Breast epithelium (tissue), 4 donors: ENCODE measurements at regions of chr10 and their contacts with region 1.

Region 1: GRCh38 chr10:69506834-69507721 is 55.8 kb downstream of the TSPAN15 start:
- DNase-seq: no peak
- H3K4me3 ChIP-seq: peak overlapping the region in 2 of 3 donors; percentile 12 to 42
- H3K27ac ChIP-seq: peak overlapping the region; percentile 36 to 52
- H3K4me1 ChIP-seq: no peaks in the 10 kb centered on the region
- H3K27me3 ChIP-seq: no peaks in the 10 kb centered on the region
- CTCF ChIP-seq: no peak
- POLR2A ChIP-seq: no peak

Region 2: DNA sequence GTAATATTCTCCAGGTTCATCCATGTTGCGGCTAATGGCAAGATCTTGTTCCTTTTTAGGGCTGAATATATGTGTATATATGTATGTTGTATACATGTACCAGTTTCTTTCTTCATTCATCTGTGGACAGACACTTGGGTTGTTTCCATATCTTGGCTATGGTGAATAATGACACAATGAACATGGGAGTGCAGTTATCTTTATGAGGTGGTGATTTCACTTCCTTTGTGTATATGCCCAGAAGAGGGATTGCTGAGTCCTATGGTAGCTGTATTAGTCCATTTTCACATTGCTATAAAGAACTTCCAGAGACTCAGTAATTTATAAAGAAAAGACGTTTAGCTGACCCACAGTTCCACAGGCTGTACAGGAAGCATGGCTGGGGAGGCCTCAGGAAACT is 72.9 kb before region 1 on chr10:
- intact Hi-C with region 1: loop called (anchors 5 kb)
- DNase-seq: no peak
- H3K4me3 ChIP-seq: no peak overlapping the region
- H3K27ac ChIP-seq: no peak overlapping the region
- H3K4me1 ChIP-seq: peaks cover 0 to 4% of the 10 kb centered on the region in 2 donors
- H3K27me3 ChIP-seq: no peaks in the 10 kb centered on the region
- CTCF ChIP-seq: no peak
- POLR2A ChIP-seq: no peak